RWPE1 (cell line): ENCODE measurements at regions of chr3 and their contacts with region 1.

Region 1: DNA sequence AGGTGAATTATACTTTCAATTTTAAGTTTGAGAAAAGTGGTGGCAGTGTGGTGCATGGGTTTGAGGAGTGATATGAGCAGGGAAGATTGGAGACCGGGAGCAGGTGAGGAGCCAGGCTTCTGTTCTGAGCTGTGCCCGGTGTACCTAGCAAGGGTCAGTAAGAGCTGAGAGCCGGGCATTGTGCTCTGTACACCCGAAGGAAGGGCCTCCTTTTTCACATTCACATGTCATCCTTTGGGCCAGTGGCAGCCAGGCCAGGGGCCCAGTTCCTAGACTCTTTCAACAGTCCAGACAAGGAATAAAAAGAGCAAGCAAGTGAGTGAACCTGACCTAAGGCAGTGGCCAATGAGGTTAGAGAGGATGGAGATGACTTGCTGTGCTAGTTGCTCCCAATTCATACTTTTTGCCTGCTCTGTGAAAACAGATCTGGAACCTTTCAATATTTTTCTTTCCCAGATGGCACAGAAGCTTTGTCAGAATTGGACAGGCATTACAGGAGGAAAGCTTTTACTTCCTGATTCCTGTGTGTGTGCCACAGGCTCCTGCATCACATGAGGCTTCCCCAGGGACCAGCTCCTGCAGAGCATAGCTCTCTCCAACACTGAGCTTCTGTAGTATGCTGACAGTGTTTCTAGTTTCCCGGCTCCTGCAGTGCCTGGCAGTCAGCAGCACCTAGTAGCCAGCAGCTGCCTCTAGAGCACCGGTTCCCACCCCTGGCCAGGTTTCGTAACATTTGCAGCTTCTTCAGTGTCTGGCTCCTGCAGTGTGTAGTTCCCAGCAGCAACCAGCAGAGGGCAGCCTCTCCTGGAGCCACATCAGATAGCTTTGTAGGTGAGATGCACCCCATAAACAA is 5.3 kb upstream of the TRA2B start:
- DNase-seq: peak; percentile 75
- H3K27ac ChIP-seq: peak overlapping the region; percentile 59
- CTCF ChIP-seq: peak; percentile 98

Region 2: GRCh38 chr3:185954366-185954723 is 11.2 kb after region 1 on chr3:
- CTCF ChIA-PET with region 1: interaction called, 36 read pairs
- POLR2A ChIA-PET with region 1: interaction called, 3 read pairs
- DNase-seq: no peak
- H3K27ac ChIP-seq: no peak overlapping the region
- CTCF ChIP-seq: no peak

Region 3: GRCh38 chr3:185959609-185960517 is 16.7 kb after region 1 on chr3:
- CTCF ChIA-PET with region 1: interaction called, 36 read pairs
- POLR2A ChIA-PET with region 1: interaction called, 3 read pairs
- DNase-seq: peak; percentile 56
- H3K27ac ChIP-seq: peak overlapping the region; percentile 84
- CTCF ChIP-seq: no peak

Region 4: GRCh38 chr3:185976977-185977678 is 34.0 kb after region 1 on chr3:
- CTCF ChIA-PET with region 1: interaction called, 11 read pairs
- POLR2A ChIA-PET with region 1: no interaction called
- DNase-seq: peak; percentile 64
- H3K27ac ChIP-seq: no peak overlapping the region
- CTCF ChIP-seq: peak; percentile 88